ENCODE measurements at regions of chr19 and their contacts with region 1.

Region 1: DNA sequence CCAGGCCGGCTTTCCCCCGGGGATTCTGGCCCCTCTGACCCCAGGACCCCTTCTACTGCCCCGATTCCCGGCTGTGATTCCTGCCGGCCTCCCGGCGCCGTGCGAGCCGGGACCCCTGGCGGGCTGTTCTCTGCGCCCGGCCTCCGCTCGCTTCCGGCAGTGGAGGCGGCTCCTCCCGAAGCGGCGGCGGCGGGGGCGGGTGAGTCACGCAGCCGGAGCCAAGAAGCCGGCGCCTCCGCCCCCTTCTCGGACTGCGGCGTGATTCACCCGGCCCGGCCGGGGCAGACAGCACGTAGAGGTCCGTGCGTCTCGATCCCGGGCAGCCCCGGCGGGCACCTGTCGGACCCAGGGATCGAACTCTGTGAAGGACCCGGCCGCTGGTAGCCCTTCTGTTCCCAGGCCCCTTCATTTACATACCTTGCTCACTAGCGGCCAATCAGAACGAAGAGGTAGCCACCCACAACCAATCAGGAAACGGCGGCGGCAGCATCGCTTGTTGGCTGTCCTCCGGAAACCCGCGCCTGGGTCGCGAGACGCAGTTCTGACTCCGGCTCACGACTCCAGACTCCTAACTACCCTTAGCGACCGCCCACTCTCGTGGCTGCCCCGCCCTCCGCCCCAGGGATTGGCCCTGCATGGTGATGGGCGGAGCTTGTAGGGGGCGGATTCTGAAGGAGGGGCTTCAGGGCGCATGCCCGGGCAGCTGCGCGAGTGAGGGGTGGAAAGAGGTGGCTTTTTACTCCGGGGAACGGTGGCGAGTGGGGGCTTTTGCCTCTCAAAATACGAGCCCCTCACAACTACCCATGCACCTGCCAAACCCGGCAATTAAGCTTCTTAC is at the start of gene SERTAD1:
- DNase-seq: peak; percentile 98
- H3K4me3 ChIP-seq: peak within 1 kb of the TSS; percentile 91
- H3K27ac ChIP-seq: peak within 1 kb of the TSS; percentile 98
- H3K27me3 ChIP-seq: no peaks in the 10 kb centered on the region
- CTCF ChIP-seq: peak; percentile 64
- polyA plus RNA-seq, gene SERTAD1: 11.9 and 16.2 TPM in 2 replicates

Region 2: GRCh38 chr19:40403262-40403984 is 22.2 kb before region 1 on chr19:
- CTCF ChIA-PET with region 1: interaction called, 11 read pairs
- POLR2A ChIA-PET with region 1: interaction called, 12 read pairs
- DNase-seq: peak; percentile 82
- H3K4me3 ChIP-seq: peak overlapping the region; percentile 63
- H3K27ac ChIP-seq: peak overlapping the region; percentile 47
- H3K27me3 ChIP-seq: no peaks in the 10 kb centered on the region
- CTCF ChIP-seq: no peak

Region 3: DNA sequence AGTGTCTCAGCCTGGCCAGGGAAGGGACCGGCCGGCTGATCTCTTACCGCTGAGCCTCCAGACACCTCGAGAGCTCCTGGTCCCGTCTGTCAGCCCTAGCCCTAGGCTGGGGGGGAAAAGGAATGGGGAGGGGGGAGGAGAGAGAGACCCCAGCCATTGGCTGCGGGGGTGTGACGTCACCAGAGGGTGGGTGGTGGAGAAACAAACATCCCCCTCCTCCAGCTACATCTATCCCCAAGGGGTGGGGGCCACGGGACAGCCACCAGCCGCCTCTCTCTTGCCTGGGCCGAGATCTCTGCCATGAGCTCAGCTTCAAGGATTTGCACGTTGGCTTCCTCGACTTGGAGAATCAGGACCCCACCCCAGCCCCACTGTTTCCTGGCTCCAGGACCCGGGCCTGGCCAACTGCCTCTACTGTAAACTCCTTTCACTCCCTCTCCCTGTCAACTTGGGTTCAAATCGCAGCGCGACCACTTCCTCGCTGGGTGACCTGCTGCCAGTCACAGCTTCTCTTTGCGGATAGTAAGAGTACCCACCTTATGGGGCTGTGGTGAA is 12.3 kb before region 1 on chr19 and contains the start of gene PRX:
- CTCF ChIA-PET with region 1: interaction called, 35 read pairs
- POLR2A ChIA-PET with region 1: interaction called, 6 read pairs
- DNase-seq: no peak
- H3K4me3 ChIP-seq: no peak within 1 kb of the TSS
- H3K27ac ChIP-seq: no peak within 1 kb of the TSS
- H3K27me3 ChIP-seq: no peaks in the 10 kb centered on the region
- CTCF ChIP-seq: no peak
- polyA plus RNA-seq, gene PRX: 1.8 and 1.9 TPM in 2 replicates

Region 4: GRCh38 chr19:40444192-40445028 is 18.7 kb after region 1 on chr19 and contains the start of gene SERTAD3:
- CTCF ChIA-PET with region 1: interaction called, 14 read pairs
- POLR2A ChIA-PET with region 1: interaction called, 43 read pairs
- DNase-seq: peak; percentile 82
- H3K4me3 ChIP-seq: peak within 1 kb of the TSS; percentile 100
- H3K27ac ChIP-seq: peak within 1 kb of the TSS; percentile 91
- H3K27me3 ChIP-seq: no peaks in the 10 kb centered on the region
- CTCF ChIP-seq: no peak
- polyA plus RNA-seq, gene SERTAD3: 16.1 and 19.6 TPM in 2 replicates

Region 5: DNA sequence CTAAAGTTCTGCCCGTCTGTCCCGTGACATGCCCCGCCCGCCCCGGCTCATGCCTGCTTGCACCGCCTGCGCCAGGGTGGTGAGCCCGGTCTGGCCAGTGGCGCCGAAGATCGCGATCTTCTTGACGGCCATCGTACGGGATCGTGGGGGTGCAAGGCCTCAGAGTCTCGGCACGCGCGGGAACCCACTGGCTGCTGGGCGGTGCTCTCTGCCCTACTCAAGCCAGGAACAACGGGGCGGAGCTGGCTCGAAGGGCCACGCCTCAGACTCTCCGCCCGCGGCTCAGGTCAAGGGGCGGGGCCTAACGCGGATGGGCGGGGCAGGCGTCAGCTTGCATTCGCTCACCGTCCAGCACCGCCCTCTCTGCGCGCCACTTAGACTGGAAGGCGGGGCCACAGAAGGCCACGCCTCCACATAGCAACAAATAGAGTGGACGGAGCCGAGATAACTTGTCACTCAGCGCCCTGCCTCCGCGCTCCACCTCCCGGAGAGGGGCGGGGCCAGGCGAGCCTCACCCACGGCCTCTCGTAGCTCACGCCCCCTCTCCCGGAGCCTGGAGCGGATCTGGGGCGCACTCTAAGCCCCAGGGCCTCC is 40.0 kb after region 1 on chr19 and contains the start of gene BLVRB:
- CTCF ChIA-PET with region 1: interaction called, 23 read pairs
- POLR2A ChIA-PET with region 1: interaction called, 15 read pairs
- DNase-seq: peak; percentile 99
- H3K4me3 ChIP-seq: peak within 1 kb of the TSS; percentile 74
- H3K27ac ChIP-seq: peak within 1 kb of the TSS; percentile 71
- H3K27me3 ChIP-seq: peaks cover 11% of the 10 kb centered on the region
- CTCF ChIP-seq: no peak
- polyA plus RNA-seq, gene BLVRB: 40.4 and 58.0 TPM in 2 replicates